A549 (cell line): ENCODE measurements at regions of chr17 and their contacts with region 1.

Region 1: GRCh38 chr17:65074778-65075250 is 18.3 kb upstream of the GNA13 start:
- DNase-seq: peak; percentile 49 to 73
- ATAC-seq: peak; percentile 67 to 80
- H3K4me3 ChIP-seq: no peak overlapping the region
- H3K27ac ChIP-seq: peak overlapping the region; percentile 65 to 88
- H3K4me1 ChIP-seq: peaks cover 59% of the 10 kb centered on the region
- CTCF ChIP-seq: no peak
- EP300 ChIP-seq: no peak
- POLR2A ChIP-seq: no peak
- RAD21 ChIP-seq: peak; percentile 40 to 44; a peak in 4 of 5 replicates

Region 2: DNA sequence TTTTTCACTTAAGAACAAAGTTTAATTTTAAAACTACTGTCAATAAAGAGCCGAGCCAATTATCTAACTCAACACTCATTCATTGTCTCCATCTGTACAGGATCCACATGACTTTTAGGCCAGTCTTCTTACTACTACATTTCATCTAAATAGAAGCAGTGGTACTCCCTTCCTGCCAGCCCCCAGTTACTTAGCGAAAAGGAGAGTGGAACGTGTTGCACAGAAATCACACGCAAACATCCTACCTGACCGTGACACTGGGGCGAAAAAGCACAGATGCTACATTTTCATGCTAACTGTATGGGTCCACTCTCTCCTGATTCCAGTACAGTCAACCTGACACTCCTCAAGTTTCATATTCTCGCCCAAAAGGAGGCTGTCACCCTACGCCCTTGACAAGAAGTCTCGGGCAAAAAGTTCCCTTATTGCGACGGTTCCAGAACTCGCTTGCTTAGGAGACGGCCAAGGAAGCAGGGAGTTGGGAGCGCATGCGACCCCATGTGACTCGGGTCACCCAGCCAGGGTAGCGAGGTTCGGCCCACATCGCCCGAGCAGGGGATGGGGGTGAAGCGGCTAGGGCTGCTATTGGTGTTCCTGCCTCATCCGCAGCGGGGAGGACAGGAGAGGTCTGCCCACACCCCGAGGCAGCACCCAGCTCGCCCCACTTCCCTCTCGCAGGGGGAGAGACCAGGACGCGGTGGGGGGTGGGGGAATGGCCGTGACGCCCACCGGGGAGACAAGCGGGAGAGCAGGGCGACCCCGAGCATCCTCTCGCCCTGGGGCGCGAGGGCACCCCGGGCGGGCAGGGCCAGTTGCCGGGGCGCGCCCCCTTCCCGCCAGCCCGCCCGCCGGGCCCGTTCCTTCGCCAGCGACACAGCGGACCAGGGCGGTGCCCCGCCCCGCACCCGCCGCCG is 19.2 kb before region 1 on chr17:
- CTCF ChIA-PET with region 1: interaction called, 6 read pairs
- POLR2A ChIA-PET with region 1: interaction called, 12 read pairs
- DNase-seq: peak; percentile 65 to 73
- ATAC-seq: peak; percentile 76 to 78
- H3K4me3 ChIP-seq: peak overlapping the region; percentile 82
- H3K27ac ChIP-seq: peak overlapping the region; percentile 92 to 97
- H3K4me1 ChIP-seq: peaks cover 23% of the 10 kb centered on the region
- CTCF ChIP-seq: no peak
- EP300 ChIP-seq: no peak
- POLR2A ChIP-seq: peak; percentile 39
- RAD21 ChIP-seq: no peak; a peak in 1 of 5 replicates

Region 3: GRCh38 chr17:65064452-65065019 is 10.3 kb before region 1 on chr17:
- CTCF ChIA-PET with region 1: interaction called, 10 read pairs
- POLR2A ChIA-PET with region 1: interaction called, 3 read pairs
- DNase-seq: peak; percentile 32 to 86
- ATAC-seq: peak; percentile 67 to 76
- H3K4me3 ChIP-seq: no peak overlapping the region
- H3K27ac ChIP-seq: peak overlapping the region; percentile 70 to 89
- H3K4me1 ChIP-seq: peaks cover 56% of the 10 kb centered on the region
- CTCF ChIP-seq: no peak
- EP300 ChIP-seq: peak; percentile 22 to 40; a peak in 2 of 5 replicates
- POLR2A ChIP-seq: no peak
- RAD21 ChIP-seq: no peak

Region 4: GRCh38 chr17:65085397-65085796 is 10.6 kb after region 1 on chr17:
- CTCF ChIA-PET with region 1: interaction called, 11 read pairs
- POLR2A ChIA-PET with region 1: interaction called, 5 read pairs
- DNase-seq: peak in 1 of 2 experiments; percentile 41
- ATAC-seq: peak in 1 of 2 experiments; percentile 62; a peak in 3 of 6 replicates
- H3K4me3 ChIP-seq: no peak overlapping the region
- H3K27ac ChIP-seq: no peak overlapping the region
- H3K4me1 ChIP-seq: peaks cover 13% of the 10 kb centered on the region; the same call in 1 of the 3 replicates
- CTCF ChIP-seq: no peak
- EP300 ChIP-seq: no peak
- POLR2A ChIP-seq: no peak
- RAD21 ChIP-seq: no peak